IMR-90 (cell line): ENCODE measurements at regions of chr14 and their contacts with region 1.

Region 1: DNA sequence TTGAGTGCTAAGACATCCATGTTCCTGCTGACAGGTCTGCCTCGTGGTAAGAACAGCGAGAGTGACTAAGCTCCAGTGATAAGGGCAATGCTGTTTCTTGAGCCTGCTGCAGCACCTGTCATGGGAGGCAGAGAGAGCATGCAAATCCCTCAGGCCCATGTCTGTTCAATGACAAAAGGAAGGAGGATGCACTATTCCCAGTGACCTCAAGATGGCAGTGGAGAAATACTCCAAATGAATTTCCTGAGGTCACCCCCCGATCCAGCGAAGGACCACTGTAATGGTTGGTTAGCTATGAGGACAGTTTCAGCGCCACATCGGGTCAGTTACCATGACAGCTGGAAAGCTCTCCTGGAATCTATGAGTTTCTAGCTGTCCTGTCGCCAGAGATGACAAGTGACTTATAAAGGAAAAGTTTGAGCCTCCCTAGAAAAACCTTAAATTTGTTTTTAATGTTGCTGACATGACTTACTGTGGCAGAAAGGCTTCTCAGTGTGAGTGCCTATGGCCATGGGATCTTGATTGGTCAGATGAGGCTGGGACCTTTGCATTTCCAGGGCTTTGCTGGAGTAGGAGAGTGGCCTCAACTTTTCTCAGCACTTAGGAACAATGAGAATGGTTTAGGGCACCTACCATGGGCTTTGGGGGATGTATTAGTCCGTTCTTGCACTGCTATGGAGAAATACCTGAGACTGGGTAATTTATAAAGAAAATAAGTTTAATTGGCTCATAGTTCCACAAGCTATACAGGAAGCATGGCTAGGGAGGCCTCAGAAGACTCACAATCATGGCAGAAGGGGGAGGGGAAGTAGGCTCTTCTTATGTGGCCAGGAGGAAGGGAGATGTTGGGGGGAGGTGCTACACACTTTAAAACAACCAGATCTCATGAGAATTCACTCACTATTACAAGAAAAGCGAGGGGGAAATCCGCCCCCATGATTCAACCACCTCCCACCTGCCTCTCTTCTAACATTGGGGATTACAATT is 88.0 kb upstream of the TMEM260 start:
- DNase-seq: peak; percentile 49
- ATAC-seq: peak; percentile 81
- H3K4me3 ChIP-seq: peak overlapping the region; percentile 9; the same call in 1 of the 2 replicates
- H3K27ac ChIP-seq: no peak overlapping the region
- H3K4me1 ChIP-seq: no peaks in the 10 kb centered on the region
- H3K27me3 ChIP-seq: peaks cover 5% of the 10 kb centered on the region
- CTCF ChIP-seq: peak; percentile 71
- POLR2A ChIP-seq: no peak
- RAD21 ChIP-seq: peak; percentile 58

Region 2: GRCh38 chr14:55438066-55438683 is 1053.4 kb before region 1 on chr14:
- CTCF ChIA-PET with region 1: no interaction called
- POLR2A ChIA-PET with region 1: no interaction called
- dilution Hi-C with region 1: no loop called
- in situ Hi-C with region 1: no loop called
- intact Hi-C with region 1: loop called (anchors 2 kb)
- DNase-seq: peak; percentile 73
- ATAC-seq: peak; percentile 85
- H3K4me3 ChIP-seq: no peak overlapping the region
- H3K27ac ChIP-seq: no peak overlapping the region
- H3K4me1 ChIP-seq: no peaks in the 10 kb centered on the region
- H3K27me3 ChIP-seq: peaks cover 12% of the 10 kb centered on the region
- CTCF ChIP-seq: peak; percentile 64
- POLR2A ChIP-seq: no peak
- RAD21 ChIP-seq: peak; percentile 65

Region 3: DNA sequence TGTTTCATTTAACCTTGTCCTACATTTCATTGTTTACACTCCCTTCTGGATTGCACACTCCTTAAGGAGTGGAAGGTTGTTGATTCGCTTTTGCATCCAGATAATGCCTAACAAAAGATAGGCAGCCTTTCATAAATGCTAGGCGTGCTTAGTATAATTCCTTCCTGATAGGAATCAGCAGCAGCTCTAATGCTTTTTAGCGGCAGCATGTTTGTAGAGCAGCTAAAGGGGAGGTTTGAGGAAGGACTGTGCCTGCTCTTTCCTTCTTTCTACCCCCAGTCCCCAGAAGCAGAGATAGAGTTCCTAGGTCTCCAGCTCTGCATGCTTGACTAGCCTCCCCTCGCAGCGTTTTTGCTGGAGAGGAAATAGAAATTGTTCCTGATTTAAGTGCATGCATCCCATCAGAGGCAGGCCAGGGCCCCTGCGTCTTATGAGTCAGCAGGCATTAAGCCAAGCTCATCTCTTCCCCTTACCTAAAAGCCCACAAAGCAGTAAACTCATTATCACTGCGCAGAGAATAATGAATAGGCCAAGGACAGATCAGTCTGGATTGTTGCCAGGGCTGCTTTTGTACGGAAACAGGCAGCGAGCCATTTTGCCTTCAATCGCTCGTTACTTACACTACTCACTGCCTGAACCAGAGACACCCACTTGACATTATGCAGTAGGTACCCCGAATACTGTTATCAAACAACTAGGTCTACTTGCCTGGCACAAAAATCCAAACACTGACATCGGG is 1037.2 kb before region 1 on chr14:
- CTCF ChIA-PET with region 1: no interaction called
- POLR2A ChIA-PET with region 1: no interaction called
- dilution Hi-C with region 1: no loop called
- in situ Hi-C with region 1: loop called (anchors 5 kb)
- intact Hi-C with region 1: no loop called
- DNase-seq: peak; percentile 86
- ATAC-seq: peak; percentile 68
- H3K4me3 ChIP-seq: no peak overlapping the region
- H3K27ac ChIP-seq: peak overlapping the region; percentile 45; the same call in 1 of the 2 replicates
- H3K4me1 ChIP-seq: peaks cover 13% of the 10 kb centered on the region
- H3K27me3 ChIP-seq: peaks cover 2% of the 10 kb centered on the region; the same call in 1 of the 2 replicates
- CTCF ChIP-seq: no peak
- POLR2A ChIP-seq: no peak
- RAD21 ChIP-seq: no peak

Region 4: DNA sequence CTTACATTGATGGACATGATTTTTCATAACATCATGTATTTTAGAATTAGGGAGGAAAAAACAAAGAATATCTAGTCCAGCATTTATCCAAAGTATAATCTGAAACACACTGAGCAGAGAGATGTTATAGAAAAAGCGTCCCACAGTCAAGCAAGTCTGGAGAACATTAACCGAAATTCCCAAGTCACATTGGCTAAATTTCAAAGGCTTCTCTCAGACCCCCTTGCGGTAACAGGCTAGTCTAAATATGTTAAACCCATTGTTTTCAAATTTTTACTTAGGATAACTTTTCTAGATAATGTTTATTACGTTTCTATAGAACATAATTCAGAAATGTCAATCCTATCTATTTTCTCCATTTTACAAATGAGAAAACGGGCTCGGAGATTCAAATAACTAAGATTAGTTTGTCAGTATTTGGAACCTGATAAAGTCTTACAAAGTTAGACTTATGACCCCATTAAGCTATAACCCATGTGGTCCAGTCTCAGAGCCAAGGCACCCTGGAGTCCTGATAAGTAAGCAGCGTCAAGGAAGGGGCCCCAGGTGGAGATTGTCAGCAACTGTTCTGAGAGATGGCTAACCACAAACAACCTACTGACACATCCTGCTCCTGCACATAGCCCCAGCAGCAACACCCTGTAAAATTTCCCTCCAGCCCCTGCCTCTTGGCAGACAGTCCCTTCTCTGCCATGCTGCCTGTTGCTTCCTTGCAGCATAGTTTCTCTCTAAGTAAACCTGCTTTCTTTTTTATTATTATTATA is 132.6 kb before region 1 on chr14:
- CTCF ChIA-PET with region 1: no interaction called
- POLR2A ChIA-PET with region 1: no interaction called
- dilution Hi-C with region 1: no loop called
- in situ Hi-C with region 1: no loop called
- intact Hi-C with region 1: no loop called
- DNase-seq: no peak
- ATAC-seq: no peak
- H3K4me3 ChIP-seq: no peak overlapping the region
- H3K27ac ChIP-seq: no peak overlapping the region
- H3K4me1 ChIP-seq: no peaks in the 10 kb centered on the region
- H3K27me3 ChIP-seq: no peaks in the 10 kb centered on the region
- CTCF ChIP-seq: no peak
- POLR2A ChIP-seq: no peak
- RAD21 ChIP-seq: no peak

Region 5: GRCh38 chr14:57182760-57183503 is 691.3 kb after region 1 on chr14:
- CTCF ChIA-PET with region 1: no interaction called
- POLR2A ChIA-PET with region 1: no interaction called
- dilution Hi-C with region 1: no loop called
- in situ Hi-C with region 1: no loop called
- intact Hi-C with region 1: loop called (anchors 2 kb)
- DNase-seq: peak; percentile 2
- ATAC-seq: peak; percentile 49; the same call in 1 of the 2 replicates
- H3K4me3 ChIP-seq: no peak overlapping the region
- H3K27ac ChIP-seq: no peak overlapping the region
- H3K4me1 ChIP-seq: no peaks in the 10 kb centered on the region
- H3K27me3 ChIP-seq: peaks cover 14% of the 10 kb centered on the region
- CTCF ChIP-seq: peak; percentile 31
- POLR2A ChIP-seq: no peak
- RAD21 ChIP-seq: peak; percentile 38; the same call in 1 of the 2 replicates

Region 6: DNA sequence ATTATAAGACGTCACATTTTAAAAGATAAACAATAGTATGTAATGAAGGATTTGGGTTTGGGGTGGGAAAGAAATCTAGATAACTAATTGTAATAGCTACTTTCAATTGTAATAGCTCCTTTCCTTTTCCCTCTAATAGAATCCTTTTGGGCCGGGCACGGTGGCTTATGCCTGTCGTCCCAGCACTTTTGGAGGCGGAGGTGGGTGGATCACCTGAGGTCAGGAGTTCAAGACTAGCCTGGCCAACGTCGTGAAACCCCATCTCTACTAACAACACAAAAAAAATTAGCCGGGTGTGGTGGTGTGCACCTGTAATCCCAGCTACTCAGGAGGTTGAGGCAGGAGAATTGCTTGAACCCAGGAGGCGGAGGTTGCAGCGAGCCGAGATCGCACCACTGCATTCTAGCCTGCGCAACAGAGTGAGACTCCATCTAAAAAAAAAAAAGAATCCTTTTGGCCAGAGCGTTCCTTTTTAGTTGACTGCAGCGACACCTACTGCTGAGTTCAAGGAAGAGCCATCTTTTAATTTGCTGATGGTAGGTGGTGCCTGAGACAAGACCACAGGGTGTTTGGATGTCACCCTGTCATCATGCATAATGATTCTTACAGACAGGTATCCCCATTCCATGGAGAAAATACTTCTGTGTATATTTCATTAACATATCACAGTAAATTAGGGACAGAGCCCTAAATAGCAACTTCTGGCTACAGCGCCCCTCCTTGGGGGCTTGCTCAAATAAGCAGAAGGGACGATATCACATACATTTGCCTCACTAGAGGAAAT is 1580.9 kb after region 1 on chr14:
- CTCF ChIA-PET with region 1: no interaction called
- POLR2A ChIA-PET with region 1: no interaction called
- dilution Hi-C with region 1: no loop called
- in situ Hi-C with region 1: no loop called
- intact Hi-C with region 1: loop called (anchors 10 kb)
- DNase-seq: peak; percentile 74
- ATAC-seq: peak; percentile 94
- H3K4me3 ChIP-seq: no peak overlapping the region
- H3K27ac ChIP-seq: no peak overlapping the region
- H3K4me1 ChIP-seq: peaks cover 5% of the 10 kb centered on the region
- H3K27me3 ChIP-seq: peaks cover 2% of the 10 kb centered on the region; the same call in 1 of the 2 replicates
- CTCF ChIP-seq: peak; percentile 83
- POLR2A ChIP-seq: no peak
- RAD21 ChIP-seq: peak; percentile 81